ENCODE measurements at regions of chr7 and their contacts with region 1.

Region 1: DNA sequence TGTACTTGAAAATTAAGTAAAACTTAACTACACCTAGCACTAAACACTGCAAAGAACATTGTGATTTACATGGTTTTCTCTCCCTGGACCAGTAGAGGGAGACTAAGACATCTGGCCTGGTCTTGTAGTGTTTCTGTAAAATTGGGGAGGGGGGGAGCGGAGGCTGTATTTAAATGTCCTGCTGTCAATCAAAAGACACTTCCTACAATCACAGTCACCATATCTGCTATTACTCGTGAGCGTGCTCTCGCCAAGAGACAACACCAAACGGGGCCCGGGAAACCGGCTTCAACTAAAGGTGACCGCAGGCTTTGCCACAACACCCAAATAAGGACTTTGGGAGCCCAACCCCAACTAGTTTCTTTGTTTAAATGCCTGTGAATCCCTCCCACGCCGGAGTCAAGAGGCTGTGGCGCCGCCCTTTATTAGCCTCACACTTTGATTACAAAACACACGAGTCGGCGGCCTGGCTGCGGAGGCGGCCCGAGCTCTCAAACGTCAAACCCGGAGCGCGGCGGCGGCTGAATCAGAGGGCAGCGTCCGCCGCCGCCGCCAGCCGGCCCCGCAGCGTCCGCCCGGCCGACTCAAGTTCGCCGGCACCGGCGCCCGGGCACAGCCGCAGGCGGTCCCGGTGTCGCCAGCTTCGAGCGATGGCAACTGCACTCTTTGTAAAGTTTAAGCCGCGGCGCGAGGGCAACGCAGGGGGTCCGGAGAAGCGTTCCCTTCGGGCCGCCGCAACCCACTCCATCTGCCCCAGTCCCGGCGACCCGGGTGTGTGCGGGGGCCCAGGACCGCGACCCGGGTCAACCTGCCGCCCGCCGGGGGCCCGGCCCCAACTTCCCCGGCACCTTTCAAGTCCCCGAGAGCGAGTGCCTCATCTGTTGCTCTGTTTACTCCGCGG is 1.3 kb downstream of the KDM7A start:
- DNase-seq: peak; percentile 79
- H3K4me3 Mint-ChIP-seq: peak overlapping the region; percentile 75
- H3K27ac Mint-ChIP-seq: no peak overlapping the region
- H3K4me1 Mint-ChIP-seq: peaks cover 15% of the 10 kb centered on the region
- H3K27me3 Mint-ChIP-seq: peaks cover 23% of the 10 kb centered on the region
- CTCF ChIP-seq: peak; percentile 44

Region 2: DNA sequence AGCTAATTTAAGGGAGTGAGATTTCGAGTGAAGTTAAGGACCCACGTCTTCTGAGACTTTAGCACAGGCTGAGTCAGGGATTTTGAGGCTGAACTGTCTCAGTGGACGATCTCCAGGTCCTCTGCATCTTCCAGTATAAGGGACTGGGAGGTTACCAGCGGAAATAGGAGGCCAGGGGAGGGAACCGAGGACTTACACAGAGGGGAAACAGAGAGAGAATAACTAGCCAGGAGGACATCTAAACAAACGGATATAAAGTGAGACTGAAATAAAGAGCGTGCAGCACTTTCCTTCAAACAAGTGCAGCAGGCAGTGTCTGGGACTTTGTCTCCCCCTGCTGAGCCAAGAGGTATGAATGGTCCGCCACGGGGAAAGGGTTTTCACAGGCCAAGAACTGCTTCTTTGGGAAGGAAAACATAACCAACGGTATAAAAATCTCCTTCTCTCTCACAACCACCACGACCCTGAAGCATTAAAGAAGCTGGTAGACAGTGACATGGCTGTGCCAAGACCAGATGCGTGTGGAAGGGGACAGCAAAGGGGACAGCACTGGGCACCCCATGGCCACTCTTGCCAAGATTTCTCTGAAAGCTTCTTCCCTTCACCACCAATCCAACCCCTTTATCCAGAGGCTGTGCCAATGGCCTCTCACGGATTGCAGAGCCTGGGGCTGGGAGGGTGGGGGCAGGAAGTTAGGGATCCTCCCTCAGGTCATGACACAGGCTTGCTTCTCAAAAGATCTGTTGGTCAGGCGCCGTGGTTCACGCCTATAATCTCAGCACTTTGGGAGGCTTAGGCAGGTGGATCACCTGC is 150.9 kb after region 1 on chr7:
- CTCF ChIA-PET with region 1: interaction called, 4 read pairs
- intact Hi-C with region 1: loop called (anchors 1 kb)
- DNase-seq: peak; percentile 55
- H3K4me3 Mint-ChIP-seq: no peak overlapping the region
- H3K27ac Mint-ChIP-seq: no peak overlapping the region
- H3K4me1 Mint-ChIP-seq: no peaks in the 10 kb centered on the region
- H3K27me3 Mint-ChIP-seq: no peaks in the 10 kb centered on the region
- CTCF ChIP-seq: peak; percentile 57